MCF 10A (cell line): ENCODE measurements at regions of chr9 and their contacts with region 1.

Region 1: GRCh38 chr9:109401168-109401989 is 80.5 kb upstream of the EPB41L4B start:
- DNase-seq: peak; percentile 77
- H3K4me3 Mint-ChIP-seq: no peak overlapping the region
- H3K27ac Mint-ChIP-seq: peak overlapping the region; percentile 85
- H3K4me1 Mint-ChIP-seq: no peaks in the 10 kb centered on the region
- H3K27me3 Mint-ChIP-seq: no peaks in the 10 kb centered on the region
- CTCF ChIP-seq: peak; percentile 83

Region 2: DNA sequence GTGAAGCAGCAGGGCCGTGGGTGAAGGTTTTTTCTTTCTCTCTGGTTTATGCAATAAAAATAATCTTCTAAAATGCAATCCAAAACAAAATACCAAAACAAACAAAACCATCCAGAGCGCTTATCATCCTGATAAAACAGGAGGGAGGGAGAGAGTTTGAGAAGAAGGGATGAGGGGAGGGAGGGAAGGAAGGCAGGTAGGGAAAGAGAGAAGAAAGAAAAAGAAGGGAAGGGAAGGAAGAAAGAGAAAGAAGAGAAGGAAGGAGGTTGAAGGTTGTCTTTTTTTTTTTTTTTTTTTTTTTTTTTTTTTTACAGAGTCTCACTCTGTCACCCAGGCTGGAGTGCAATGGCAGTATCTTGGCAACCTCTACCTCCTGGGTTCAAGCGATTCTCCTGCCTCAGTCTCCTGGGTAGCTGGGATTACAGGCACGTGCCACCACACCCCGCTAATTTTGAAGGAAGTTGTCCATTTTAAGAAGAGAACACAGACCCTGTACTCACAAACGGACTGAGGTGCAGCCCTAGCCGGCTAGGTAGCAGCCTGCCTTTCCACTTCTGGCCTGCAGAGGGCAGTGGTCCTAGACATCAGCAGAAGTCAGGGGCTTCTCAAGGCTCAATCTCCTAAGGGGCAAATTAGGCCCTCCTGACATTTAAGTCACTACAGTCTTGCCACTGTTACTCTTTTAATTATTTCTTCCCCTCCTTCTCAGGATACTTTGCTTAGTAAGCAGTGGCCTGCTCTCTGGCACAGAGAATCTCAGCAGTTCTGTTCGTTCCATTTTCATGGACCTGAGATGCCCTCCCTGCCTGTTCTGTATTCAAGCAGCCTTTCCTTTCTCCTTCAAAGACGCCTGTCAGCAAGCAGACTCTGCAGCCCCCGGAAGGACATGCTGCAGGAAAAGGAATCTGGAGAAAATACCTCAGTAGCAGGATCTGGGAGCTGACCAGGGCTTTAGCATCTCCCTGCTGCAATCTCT is 156.9 kb before region 1 on chr9:
- CTCF ChIA-PET with region 1: no interaction called
- POLR2A ChIA-PET with region 1: no interaction called
- intact Hi-C with region 1: loop called (anchors 2 kb)
- DNase-seq: peak; percentile 73
- H3K4me3 Mint-ChIP-seq: no peak overlapping the region
- H3K27ac Mint-ChIP-seq: no peak overlapping the region
- H3K4me1 Mint-ChIP-seq: peaks cover 14% of the 10 kb centered on the region
- H3K27me3 Mint-ChIP-seq: no peaks in the 10 kb centered on the region
- CTCF ChIP-seq: peak; percentile 96

Region 3: DNA sequence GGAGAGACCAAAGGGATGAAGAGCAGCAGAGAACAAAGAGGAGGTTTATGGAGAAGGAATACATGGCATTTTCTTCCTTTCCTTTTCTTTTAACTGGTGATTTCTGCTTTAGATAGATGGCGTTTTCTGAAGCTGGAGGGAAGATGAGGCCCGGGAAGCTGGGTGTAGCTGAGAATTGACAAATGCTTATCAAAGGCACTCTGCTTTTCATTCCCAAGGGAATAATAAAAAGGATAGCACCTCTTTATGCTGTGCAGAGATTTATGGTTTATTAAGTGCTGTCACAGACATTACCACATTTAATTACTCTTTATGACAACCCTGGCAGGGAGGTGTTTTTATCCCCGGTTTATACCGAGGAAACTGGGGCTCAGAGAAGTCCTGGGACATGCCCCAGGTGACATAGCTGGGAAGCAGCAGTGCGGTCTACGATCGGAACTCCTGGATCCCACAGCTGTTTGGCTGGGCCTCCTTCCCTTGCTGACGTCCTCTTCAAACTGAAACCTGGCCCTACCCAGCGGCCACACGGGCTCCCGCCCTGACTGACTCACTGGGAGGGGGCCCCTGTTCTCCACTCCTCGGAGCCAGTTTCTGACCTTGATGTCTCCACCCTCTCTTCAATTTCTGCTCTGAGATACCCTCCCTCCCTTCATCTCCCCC is 72.3 kb before region 1 on chr9:
- CTCF ChIA-PET with region 1: interaction called, 3 read pairs
- POLR2A ChIA-PET with region 1: no interaction called
- intact Hi-C with region 1: loop called (anchors 2 kb)
- DNase-seq: peak; percentile 90
- H3K4me3 Mint-ChIP-seq: peak overlapping the region; percentile 52
- H3K27ac Mint-ChIP-seq: peak overlapping the region; percentile 92
- H3K4me1 Mint-ChIP-seq: peaks cover 66% of the 10 kb centered on the region
- H3K27me3 Mint-ChIP-seq: no peaks in the 10 kb centered on the region
- CTCF ChIP-seq: no peak

Region 4: GRCh38 chr9:109387206-109387605 is 14.2 kb before region 1 on chr9:
- CTCF ChIA-PET with region 1: interaction called, 13 read pairs
- POLR2A ChIA-PET with region 1: no interaction called
- intact Hi-C with region 1: no loop called
- DNase-seq: no peak
- H3K4me3 Mint-ChIP-seq: no peak overlapping the region
- H3K27ac Mint-ChIP-seq: peak overlapping the region; percentile 49
- H3K4me1 Mint-ChIP-seq: no peaks in the 10 kb centered on the region
- H3K27me3 Mint-ChIP-seq: no peaks in the 10 kb centered on the region
- CTCF ChIP-seq: no peak

Region 5: GRCh38 chr9:109430231-109430630 is 28.9 kb after region 1 on chr9:
- CTCF ChIA-PET with region 1: no interaction called
- POLR2A ChIA-PET with region 1: no interaction called
- intact Hi-C with region 1: no loop called
- DNase-seq: no peak
- H3K4me3 Mint-ChIP-seq: no peak overlapping the region
- H3K27ac Mint-ChIP-seq: no peak overlapping the region
- H3K4me1 Mint-ChIP-seq: no peaks in the 10 kb centered on the region
- H3K27me3 Mint-ChIP-seq: no peaks in the 10 kb centered on the region
- CTCF ChIP-seq: no peak

Region 6: DNA sequence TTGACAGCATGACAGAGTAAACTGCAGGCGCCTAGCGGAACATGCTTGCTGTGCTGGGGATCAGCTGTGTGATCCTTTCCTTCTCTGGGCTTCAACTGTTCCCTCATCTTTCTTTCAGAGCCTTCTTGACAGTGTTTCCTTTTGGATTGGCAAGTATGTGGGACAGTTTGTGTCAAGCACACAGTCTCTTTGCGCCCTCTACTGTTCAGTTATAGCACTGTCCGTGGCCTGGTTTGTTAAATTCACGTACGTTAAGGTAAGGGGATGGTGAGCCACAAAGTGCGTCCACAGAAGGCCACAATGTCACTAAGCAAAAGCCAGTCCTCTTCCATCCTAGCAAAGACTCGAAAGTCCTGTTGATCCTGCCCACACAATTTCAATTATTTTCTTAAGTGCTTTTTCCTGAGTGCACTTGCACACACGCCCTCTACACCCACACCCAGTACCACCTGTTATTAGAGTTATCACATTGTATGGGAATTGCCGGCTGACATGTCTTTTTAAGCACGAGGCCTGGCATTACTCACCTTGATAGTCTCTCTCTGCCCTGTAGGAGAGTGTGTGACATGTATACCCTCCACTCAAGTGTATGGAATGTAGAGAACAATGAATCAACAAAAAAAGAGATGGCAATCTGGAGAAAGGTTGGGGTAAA is 119.2 kb after region 1 on chr9:
- CTCF ChIA-PET with region 1: interaction called, 5 read pairs
- POLR2A ChIA-PET with region 1: no interaction called
- intact Hi-C with region 1: loop called (anchors 1 kb)
- DNase-seq: peak; percentile 82
- H3K4me3 Mint-ChIP-seq: no peak overlapping the region
- H3K27ac Mint-ChIP-seq: peak overlapping the region; percentile 49
- H3K4me1 Mint-ChIP-seq: peaks cover 10% of the 10 kb centered on the region
- H3K27me3 Mint-ChIP-seq: no peaks in the 10 kb centered on the region
- CTCF ChIP-seq: peak; percentile 85

Region 7: DNA sequence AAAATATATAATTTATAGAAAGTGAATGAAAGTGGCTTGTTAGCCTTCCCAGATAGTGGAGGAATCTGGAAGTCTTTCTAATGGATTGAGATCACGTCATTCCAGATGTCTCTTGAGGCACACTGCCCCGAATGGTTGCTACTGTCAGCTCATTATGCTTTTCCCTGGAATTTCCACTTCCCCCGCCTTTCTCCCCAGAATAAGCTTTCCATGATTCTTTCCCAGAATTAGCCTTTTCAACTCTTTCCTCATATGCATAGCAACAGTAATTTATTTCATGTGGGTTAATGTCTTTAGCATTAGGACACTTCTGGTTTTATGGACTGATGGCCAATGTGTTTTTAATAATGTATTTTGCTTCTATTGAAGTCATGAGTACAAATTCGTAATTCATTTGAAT is 460.1 kb after region 1 on chr9:
- CTCF ChIA-PET with region 1: no interaction called
- POLR2A ChIA-PET with region 1: no interaction called
- intact Hi-C with region 1: no loop called
- DNase-seq: no peak
- H3K4me3 Mint-ChIP-seq: no peak overlapping the region
- H3K27ac Mint-ChIP-seq: no peak overlapping the region
- H3K4me1 Mint-ChIP-seq: peaks cover 4% of the 10 kb centered on the region
- H3K27me3 Mint-ChIP-seq: no peaks in the 10 kb centered on the region
- CTCF ChIP-seq: no peak